Left colon (tissue), 2 donors: ENCODE measurements at regions of chr4 and their contacts with region 1.

Region 1: DNA sequence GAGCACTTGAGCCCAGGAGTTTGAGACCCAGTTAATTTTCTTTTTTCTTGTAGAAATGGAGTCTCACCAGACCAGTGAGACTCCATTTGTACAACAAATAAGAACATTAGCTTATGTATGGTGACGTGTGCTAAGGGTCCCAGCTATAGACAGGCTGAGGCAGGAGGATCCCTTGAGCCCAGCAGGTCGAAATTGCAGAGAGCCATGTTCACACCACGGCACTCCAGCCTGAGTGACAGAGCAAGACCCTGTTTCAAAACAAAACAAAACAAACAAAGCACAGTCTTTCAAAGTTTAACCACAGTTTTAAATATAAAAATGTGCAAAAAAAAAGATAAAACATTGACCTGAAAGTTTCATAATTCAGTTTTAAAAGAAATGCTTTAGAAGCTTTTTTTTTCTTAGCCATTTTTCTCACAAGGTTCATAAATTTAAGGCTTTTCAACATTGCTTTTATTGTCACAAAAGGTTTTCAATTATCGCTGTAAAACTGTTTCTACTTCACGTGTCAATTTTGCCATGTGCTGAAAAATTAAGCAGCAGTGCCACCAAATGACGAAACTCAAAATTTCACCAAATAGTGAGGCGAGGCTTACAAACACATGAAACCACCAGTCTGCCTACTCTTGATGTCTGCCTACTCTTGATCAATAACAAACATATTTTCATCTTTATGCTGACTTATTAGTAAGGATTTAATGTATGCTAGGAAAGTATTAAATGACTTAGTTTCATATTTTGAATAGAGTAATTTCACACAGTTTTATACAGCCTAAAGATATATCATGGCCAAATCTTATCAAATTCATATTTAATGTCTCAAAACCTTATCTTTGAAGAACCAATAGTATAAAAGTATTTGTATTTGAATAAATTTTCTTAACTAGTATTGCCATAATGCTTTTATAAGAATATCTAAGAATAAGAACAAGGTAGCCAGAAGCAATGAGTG is 126.3 kb downstream of the NEK1 start:
- DNase-seq: peak in 1 of 2 donors; percentile 14
- ATAC-seq: peak; percentile 82

Region 2: DNA sequence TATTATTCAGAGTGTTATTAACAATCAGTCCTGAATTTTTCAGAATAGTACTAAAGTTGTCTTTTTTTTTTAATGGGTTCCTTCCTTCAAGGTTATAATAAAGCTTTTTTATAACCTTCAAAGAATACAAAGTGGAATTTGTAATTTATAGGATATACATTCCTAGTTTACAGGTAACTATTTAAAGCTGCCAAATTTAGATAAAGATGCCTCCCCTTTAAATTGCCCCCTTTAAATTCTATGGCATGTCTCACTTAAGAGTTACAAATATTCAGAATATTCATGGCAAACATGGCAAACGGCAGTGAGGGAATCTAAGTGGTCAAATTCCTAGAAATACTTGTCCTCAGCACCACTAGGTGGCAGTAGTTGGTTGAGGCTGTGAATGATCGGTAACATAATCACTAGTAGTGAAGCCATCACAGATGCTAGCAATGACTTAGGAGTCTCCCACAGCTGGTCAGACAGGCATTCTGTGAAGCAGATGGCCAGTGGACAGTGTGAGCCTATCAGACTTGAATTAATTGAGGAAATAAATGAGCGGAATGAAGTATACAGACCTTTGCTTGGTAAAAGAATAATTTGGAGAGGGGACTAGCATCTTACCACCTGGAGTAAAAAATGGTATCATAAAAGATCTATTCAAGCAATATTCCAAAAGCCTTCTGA is 562.4 kb before region 1 on chr4:
- intact Hi-C with region 1: loop called in 1 of 2 experiments (anchors 5 kb)
- DNase-seq: peak; percentile 41 to 62
- ATAC-seq: peak; percentile 80

Region 3: DNA sequence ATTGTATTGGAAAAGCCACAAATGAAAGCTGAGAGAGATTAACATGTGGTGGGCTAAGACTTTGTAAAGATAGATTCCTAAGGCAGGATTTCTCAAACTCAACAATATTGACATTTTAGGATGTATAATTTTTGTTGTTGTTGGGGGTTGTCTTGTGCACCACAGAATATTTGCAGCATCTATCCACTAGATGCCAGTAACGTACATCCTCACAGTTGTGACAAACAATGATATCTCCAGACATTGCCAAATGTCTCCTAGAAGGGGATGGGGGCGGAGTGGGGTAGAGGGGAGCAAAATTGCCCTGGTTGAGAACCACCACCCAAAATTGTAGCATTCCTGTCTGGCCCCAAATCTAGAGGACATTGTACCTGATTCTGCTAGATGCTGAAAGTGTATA is 461.3 kb before region 1 on chr4:
- intact Hi-C with region 1: loop called in 1 of 2 experiments (anchors 10 kb)
- DNase-seq: no peak
- ATAC-seq: peak; percentile 87